ENCODE measurements at regions of chr6 and their contacts with region 1.

Region 1: GRCh38 chr6:36809941-36810803 is 29.1 kb downstream of the CPNE5 start:
- DNase-seq: no peak
- H3K4me3 ChIP-seq: no peak overlapping the region
- H3K27ac ChIP-seq: no peak overlapping the region
- H3K4me1 ChIP-seq: peaks cover 1 to 11% (median 3%) of the 10 kb centered on the region in 4 experiments; a peak in 4 of 7 replicates
- H3K27me3 ChIP-seq: no peaks in the 10 kb centered on the region; a peak in 2 of 7 replicates
- CTCF ChIP-seq: peak; percentile 44 to 48 (median 44)
- EP300 ChIP-seq: no peak
- POLR2A ChIP-seq: no peak
- RAD21 ChIP-seq: peak; percentile 61 to 67

Region 2: GRCh38 chr6:36793913-36794712 is 16.1 kb before region 1 on chr6:
- CTCF ChIA-PET with region 1: interaction called, 16 read pairs
- POLR2A ChIA-PET with region 1: interaction called, 4 read pairs
- DNase-seq: no peak
- H3K4me3 ChIP-seq: peak overlapping the region in 3 of 4 experiments; percentile 9 to 49 (median 14); a peak in 5 of 8 replicates
- H3K27ac ChIP-seq: 0 out of 2 replicates have a peak overlapping the region, but pooled peaks have one; percentile 30
- H3K4me1 ChIP-seq: peaks cover 4 to 37% (median 25%) of the 10 kb centered on the region in 4 experiments
- H3K27me3 ChIP-seq: no peaks in the 10 kb centered on the region
- CTCF ChIP-seq: no peak
- EP300 ChIP-seq: no peak
- POLR2A ChIP-seq: no peak
- RAD21 ChIP-seq: no peak

Region 3: GRCh38 chr6:36827261-36828079 is 17.3 kb after region 1 on chr6:
- CTCF ChIA-PET with region 1: interaction called, 10 read pairs
- POLR2A ChIA-PET with region 1: no interaction called
- DNase-seq: no peak
- H3K4me3 ChIP-seq: no peak overlapping the region
- H3K27ac ChIP-seq: no peak overlapping the region
- H3K4me1 ChIP-seq: no peaks in the 10 kb centered on the region; a peak in 1 of 7 replicates
- H3K27me3 ChIP-seq: no peaks in the 10 kb centered on the region; a peak in 1 of 7 replicates
- CTCF ChIP-seq: no peak
- EP300 ChIP-seq: no peak
- POLR2A ChIP-seq: no peak
- RAD21 ChIP-seq: no peak

Measured in H1 (cell line).